Activated B cell treated with CpG ODN at 0.5 μM for 24 hours (primary cell): ENCODE measurements at regions of chr11 and their contacts with region 1.

Region 1: DNA sequence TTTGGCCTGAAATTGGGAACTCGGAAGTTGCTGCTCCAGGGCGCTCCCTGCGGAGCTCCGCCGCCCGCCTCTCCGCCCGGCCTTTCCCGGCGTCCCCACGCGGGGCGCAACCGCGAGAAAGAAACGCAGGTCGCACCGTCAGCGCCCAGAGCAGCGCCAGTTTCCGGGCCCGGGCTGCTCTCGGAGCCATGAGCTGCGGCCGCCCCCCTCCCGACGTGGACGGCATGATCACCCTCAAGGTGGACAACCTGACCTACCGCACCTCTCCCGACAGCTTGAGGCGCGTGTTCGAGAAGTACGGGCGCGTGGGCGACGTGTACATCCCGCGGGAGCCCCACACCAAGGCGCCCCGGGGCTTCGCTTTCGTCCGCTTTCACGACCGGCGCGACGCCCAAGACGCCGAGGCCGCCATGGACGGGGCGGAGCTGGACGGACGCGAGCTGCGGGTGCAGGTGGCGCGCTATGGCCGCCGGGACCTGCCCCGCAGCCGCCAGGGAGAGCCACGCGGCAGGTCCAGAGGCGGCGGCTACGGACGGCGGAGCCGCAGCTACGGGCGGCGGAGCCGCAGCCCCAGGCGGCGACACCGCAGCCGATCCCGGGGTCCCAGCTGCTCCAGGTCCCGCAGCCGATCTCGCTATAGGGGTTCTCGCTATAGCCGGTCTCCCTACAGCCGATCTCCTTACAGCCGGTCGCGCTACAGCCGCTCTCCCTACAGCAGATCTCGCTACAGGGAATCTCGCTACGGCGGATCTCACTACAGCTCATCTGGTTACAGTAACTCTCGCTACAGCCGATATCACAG is 521 bp downstream of the SRSF8 start:
- DNase-seq: peak; percentile 76
- ATAC-seq: peak; percentile 71
- H3K4me3 Mint-ChIP-seq: peak overlapping the region; percentile 93
- H3K27ac Mint-ChIP-seq: peak overlapping the region; percentile 99
- H3K4me1 Mint-ChIP-seq: peaks cover 29% of the 10 kb centered on the region
- H3K27me3 Mint-ChIP-seq: no peaks in the 10 kb centered on the region
- CTCF ChIP-seq: no peak

Region 2: DNA sequence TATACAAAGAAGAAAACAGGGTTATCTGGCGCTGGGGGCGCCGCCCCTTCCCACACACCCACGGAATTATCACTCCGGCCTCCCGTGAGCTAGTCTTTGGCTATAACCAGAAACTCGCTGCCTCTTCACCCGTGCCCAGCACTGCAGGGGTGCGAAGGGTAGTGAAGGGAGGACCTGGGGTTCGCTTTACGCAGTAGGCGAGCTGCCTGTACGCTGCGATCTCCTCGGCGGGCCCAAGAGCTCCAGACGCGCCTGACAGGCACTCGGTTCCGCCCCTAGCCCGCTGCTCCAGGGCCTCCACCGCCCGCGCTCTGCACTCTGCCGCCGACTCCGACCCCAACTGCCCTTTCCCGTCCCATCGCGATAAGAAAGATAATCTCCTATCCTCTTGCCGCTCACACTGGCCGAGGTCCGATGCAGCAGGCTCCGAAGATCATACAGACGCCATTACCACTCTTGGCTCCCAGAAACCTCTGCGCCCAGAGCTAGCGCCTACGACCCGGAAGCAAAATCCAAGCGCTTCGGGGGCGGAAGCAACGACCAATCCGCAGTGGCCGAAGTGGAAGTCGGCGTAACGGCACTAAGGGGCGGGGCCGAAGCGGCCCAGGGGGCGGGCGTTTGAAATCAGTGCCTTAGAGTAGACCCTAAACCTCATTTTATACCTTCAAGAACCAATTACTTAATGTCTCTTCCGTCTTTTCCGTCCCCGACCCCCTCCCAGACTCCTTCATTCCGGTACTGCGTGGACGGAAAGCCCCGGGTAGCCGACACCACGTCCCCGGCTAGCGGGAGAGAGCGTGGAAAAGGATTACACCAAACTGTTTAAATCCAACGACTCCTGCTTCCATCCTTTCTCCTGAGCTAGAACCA is 93.9 kb before region 1 on chr11 and contains the starts of genes CWC15 and KDM4D:
- CTCF ChIA-PET with region 1: interaction called, 4 read pairs
- POLR2A ChIA-PET with region 1: interaction called, 38 read pairs
- intact Hi-C with region 1: loop called (anchors 1 kb)
- DNase-seq: peak; percentile 87
- ATAC-seq: peak; percentile 100
- H3K4me3 Mint-ChIP-seq: peak within 1 kb of the TSS; percentile 99
- H3K27ac Mint-ChIP-seq: peak within 1 kb of the TSS; percentile 95
- H3K4me1 Mint-ChIP-seq: peaks cover 20% of the 10 kb centered on the region
- H3K27me3 Mint-ChIP-seq: no peaks in the 10 kb centered on the region
- CTCF ChIP-seq: no peak
- total RNA-seq, gene CWC15: 69.1 and 69.2 TPM in 2 replicates
- total RNA-seq, gene KDM4D: 0.67 and 0.93 TPM in 2 replicates

Region 3: DNA sequence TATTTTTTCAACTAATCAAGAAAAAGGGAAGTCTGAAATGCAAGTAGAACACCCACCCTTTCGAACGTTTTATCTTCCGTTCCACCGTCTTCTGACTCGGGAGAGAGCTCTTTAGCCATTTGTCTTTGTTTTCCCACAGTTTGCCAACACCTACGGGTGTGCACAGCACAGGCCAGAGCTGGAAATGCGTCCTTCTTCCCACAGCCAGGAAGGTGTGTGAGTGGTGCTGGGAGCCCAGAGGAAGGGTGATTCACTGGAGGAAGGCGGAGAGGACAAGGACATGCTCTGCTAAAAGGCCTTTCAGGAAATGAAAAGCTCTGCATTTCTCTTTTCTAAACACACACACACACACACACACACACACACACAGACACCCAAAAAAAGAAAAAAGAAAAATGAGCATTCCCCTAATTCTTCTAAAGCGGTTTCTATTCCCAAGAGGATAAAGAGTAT is 40.9 kb after region 1 on chr11:
- CTCF ChIA-PET with region 1: interaction called, 6 read pairs
- POLR2A ChIA-PET with region 1: interaction called, 12 read pairs
- intact Hi-C with region 1: loop called (anchors 5 kb)
- DNase-seq: no peak
- ATAC-seq: peak; percentile 45
- H3K4me3 Mint-ChIP-seq: peak overlapping the region; percentile 79
- H3K27ac Mint-ChIP-seq: peak overlapping the region; percentile 93
- H3K4me1 Mint-ChIP-seq: peaks cover 58% of the 10 kb centered on the region
- H3K27me3 Mint-ChIP-seq: no peaks in the 10 kb centered on the region
- CTCF ChIP-seq: no peak

Region 4: DNA sequence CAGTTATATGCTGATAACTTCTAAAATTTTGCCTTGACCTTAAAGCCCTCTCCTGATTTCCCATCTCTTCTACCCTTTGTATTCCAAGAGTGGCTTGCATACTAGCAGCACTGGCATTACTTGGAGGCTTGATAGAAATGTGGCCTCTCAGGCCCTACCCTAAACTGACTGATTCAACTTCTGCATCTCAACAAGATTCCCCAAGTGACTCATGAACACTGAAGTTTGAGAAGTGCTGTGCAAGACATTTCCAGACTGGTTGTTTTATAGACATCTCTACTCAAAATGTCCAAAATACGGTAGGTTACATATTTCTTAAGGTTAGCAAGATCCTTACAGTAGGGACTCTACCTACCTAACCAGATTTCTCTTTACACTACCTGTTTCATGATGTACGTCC is 115.2 kb after region 1 on chr11:
- CTCF ChIA-PET with region 1: no interaction called
- POLR2A ChIA-PET with region 1: no interaction called
- intact Hi-C with region 1: no loop called
- DNase-seq: no peak
- ATAC-seq: no peak
- H3K4me3 Mint-ChIP-seq: no peak overlapping the region
- H3K27ac Mint-ChIP-seq: peak overlapping the region; percentile 51
- H3K4me1 Mint-ChIP-seq: peaks cover 8% of the 10 kb centered on the region
- H3K27me3 Mint-ChIP-seq: no peaks in the 10 kb centered on the region
- CTCF ChIP-seq: no peak

Region 5: DNA sequence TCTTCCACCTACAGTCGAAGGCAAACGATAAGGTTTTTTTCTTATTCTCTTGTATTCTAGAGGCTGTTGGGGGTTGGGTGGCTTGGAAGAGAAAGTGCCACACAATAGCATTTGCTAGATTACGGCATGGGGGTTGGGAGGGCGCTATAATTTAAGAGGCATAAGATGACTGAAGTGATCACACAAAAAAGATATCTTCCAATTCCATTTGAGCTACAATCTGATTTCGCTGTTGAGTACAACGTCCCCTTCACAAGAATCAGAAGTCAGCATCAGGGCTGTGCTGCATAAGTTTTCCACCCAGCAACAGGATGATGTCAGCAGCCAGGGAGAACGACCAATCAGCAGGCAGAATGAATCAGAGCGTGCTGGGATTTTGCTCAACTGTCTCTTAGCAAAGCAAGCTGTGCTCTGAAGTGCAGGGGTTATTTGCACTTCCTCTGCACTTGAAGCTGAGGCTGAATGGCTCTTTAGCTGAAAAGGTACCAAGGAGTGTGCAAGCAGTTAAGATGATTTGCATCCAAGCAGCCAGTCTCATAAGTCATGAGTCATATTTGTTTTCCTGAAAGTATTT is 187.0 kb after region 1 on chr11:
- CTCF ChIA-PET with region 1: no interaction called
- POLR2A ChIA-PET with region 1: interaction called, 5 read pairs
- intact Hi-C with region 1: loop called (anchors 2 kb)
- DNase-seq: peak; percentile 54
- ATAC-seq: peak; percentile 94
- H3K4me3 Mint-ChIP-seq: peak overlapping the region; percentile 75
- H3K27ac Mint-ChIP-seq: peak overlapping the region; percentile 91
- H3K4me1 Mint-ChIP-seq: peaks cover 81% of the 10 kb centered on the region
- H3K27me3 Mint-ChIP-seq: no peaks in the 10 kb centered on the region
- CTCF ChIP-seq: no peak

Region 6: DNA sequence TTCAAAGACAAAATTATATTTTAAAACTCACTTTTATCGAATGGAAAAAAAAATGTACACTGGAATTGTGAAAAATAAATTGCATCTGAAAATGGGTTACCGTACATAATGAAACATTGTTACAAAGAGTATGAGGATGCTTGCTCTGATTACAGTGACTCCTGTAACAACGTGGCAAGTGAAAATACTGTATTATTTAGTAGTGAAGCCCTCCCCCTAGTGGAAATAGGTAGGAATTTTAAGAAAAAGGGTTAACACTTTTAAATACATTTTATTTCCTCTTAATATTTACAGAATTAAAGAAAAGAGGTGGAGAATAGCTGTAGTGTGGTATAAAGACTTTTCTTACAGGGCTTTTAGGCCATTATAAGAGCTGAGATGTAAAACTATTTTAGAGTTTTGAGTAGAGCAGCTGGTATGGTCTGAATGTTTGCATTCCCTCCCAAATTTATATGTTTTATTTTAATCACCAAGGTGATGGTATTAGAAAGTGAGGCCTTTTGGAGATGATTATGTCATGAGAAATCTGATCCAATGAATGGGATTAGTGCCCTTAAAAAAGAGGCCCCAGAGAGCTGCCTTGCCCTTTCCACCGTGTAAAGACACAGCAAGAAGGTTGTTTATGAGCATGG is 697.1 kb after region 1 on chr11:
- CTCF ChIA-PET with region 1: interaction called, 3 read pairs
- POLR2A ChIA-PET with region 1: interaction called, 3 read pairs
- intact Hi-C with region 1: loop called (anchors 1 kb)
- DNase-seq: no peak
- ATAC-seq: peak; percentile 69
- H3K4me3 Mint-ChIP-seq: no peak overlapping the region
- H3K27ac Mint-ChIP-seq: no peak overlapping the region
- H3K4me1 Mint-ChIP-seq: peaks cover 23% of the 10 kb centered on the region
- H3K27me3 Mint-ChIP-seq: no peaks in the 10 kb centered on the region
- CTCF ChIP-seq: no peak

Region 7: GRCh38 chr11:96389720-96390487 is 1322.7 kb after region 1 on chr11 and contains the starts of genes CCDC82 and JRKL:
- CTCF ChIA-PET with region 1: no interaction called
- POLR2A ChIA-PET with region 1: no interaction called
- intact Hi-C with region 1: loop called (anchors 5 kb)
- DNase-seq: peak; percentile 99
- ATAC-seq: peak; percentile 98
- H3K4me3 Mint-ChIP-seq: peak within 1 kb of the TSS; percentile 94
- H3K27ac Mint-ChIP-seq: peak within 1 kb of the TSS; percentile 90
- H3K4me1 Mint-ChIP-seq: peaks cover 33% of the 10 kb centered on the region
- H3K27me3 Mint-ChIP-seq: no peaks in the 10 kb centered on the region
- CTCF ChIP-seq: no peak
- total RNA-seq, gene CCDC82: 22.6 and 33.8 TPM in 2 replicates
- total RNA-seq, gene JRKL: 9.6 and 9.8 TPM in 2 replicates